Posterior vena cava (tissue), 2 donors: ENCODE measurements at regions of chr12 and their contacts with region 1.

Region 1: DNA sequence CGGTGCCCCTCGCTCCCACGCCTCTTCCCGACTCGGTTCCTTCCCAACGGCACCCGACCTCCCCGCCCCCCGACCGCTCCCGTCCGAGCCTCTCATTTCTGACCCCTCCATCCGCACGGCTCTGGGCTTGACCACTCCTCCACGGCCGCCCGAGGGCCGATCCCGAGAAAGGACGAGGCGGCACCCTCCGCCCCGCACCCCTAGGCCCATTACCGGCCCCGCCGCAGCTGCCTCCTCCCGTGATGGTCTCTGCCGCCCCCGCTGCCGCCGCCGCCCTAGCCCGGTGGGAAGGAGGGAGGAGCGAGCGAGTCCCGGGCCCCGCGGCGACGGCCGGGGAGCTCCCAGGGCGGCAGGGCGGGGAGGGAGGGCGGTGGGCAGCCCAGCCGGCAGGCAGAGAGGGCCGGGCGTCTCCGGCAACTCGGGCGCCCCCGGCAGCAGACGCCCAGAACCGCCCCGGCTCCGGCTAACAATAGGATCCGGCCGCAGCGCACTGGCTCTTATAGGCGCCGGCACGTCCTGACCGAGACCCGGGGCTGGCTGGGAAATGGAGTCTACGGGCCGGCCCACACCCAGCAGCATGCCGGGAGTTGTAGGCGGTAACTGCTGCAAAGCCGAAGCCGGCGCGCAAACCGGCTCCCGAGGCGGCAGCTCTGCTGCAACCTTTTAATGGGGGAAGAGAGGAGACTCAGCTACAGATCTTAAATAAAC is at the start of gene CSRNP2:
- DNase-seq: peak; percentile 99
- total RNA-seq, gene CSRNP2: 23.6 to 29.4 TPM

Region 2: GRCh38 chr12:51217968-51218606 is 134.8 kb after region 1 on chr12 and contains the start of gene POU6F1:
- intact Hi-C with region 1: loop called in 1 of 2 experiments (anchors 10 kb)
- DNase-seq: peak; percentile 93
- total RNA-seq, gene POU6F1: 18.1 to 19.4 TPM